MCF 10A (cell line): ENCODE measurements at regions of chr15 and their contacts with region 1.

Region 1: DNA sequence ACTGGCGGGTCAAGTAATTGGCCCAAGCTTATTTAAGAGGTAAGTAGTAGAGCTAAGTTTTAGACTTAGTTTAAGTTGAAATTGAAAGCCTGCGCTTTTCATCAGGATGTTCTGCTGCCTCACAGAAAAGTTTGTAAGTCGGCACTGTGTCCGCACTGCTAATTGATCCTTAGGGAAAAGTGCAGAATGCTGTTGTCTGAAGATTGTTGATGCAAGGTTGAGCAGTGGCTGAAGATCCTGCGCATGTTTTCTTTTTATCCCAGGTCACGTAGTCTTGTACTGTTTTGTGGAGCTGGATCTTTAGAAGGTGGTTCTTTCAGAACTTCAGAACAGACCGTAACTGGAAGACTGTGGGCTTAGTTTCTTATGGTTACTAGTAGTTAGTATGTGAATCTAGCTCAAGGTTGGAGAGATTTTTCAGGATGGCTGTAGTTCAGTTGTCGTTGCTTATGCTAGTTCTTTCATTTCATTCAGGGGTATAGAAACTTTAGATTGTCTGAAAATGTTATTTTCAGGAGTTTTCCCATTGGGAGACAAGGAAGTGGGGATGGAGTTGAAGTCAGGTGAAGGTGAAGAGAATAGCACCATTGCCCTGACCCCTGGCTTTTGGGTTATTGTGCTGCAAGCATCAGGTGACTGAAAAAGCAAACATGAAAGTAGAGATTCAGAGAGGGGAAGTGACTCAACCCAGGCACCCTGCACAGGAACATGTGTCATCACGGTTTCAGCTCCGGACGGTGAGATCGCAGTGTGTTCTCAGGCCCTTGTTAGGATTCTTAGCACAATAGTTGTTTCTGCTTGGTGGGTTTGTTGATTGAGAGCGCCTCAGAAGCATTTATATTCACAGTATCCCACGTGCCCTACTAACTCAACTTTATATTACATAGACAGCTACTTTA is 32.8 kb downstream of the AKAP13 start:
- DNase-seq: peak; percentile 97
- H3K4me3 Mint-ChIP-seq: peak overlapping the region; percentile 60
- H3K27ac Mint-ChIP-seq: peak overlapping the region; percentile 94
- H3K4me1 Mint-ChIP-seq: peaks cover 57% of the 10 kb centered on the region
- H3K27me3 Mint-ChIP-seq: no peaks in the 10 kb centered on the region
- CTCF ChIP-seq: no peak

Region 2: GRCh38 chr15:85010386-85011159 is 402.6 kb before region 1 on chr15:
- CTCF ChIA-PET with region 1: no interaction called
- POLR2A ChIA-PET with region 1: no interaction called
- intact Hi-C with region 1: no loop called
- DNase-seq: no peak
- H3K4me3 Mint-ChIP-seq: no peak overlapping the region
- H3K27ac Mint-ChIP-seq: no peak overlapping the region
- H3K4me1 Mint-ChIP-seq: peaks cover 10% of the 10 kb centered on the region
- H3K27me3 Mint-ChIP-seq: no peaks in the 10 kb centered on the region
- CTCF ChIP-seq: no peak

Region 3: DNA sequence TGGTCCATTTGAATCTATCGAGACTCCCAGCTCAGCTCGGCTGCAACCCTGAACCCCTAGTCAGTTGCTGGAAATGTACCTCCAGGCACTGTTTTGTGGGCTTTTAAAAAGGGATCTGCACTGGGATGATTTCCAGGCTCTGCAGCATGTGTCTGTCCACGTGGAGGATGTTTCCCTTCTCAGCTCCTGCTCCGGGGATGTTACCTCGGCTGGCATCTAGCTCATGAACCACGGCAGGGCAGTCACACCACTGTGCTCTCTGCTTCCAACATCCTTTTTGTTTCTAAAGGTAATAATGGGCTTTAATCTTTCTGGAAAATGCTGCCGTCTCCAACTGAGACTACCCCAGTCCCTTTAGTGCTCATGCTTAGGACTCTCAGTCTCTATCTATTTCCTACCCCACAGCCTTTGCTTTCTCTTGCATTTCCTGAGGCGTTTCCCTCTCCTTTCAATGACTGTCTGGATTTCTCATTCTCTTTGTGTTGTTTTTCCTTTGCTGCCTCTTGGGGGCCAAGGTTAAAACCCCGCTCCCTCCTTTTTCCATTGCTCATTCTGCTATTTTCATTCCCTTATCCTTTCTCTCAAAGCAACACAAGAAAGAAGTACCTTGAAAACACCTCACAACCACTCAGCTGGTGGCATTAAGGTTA is 75.7 kb before region 1 on chr15:
- CTCF ChIA-PET with region 1: interaction called, 134 read pairs
- POLR2A ChIA-PET with region 1: interaction called, 6 read pairs
- intact Hi-C with region 1: no loop called
- DNase-seq: no peak
- H3K4me3 Mint-ChIP-seq: no peak overlapping the region
- H3K27ac Mint-ChIP-seq: no peak overlapping the region
- H3K4me1 Mint-ChIP-seq: peaks cover 25% of the 10 kb centered on the region
- H3K27me3 Mint-ChIP-seq: no peaks in the 10 kb centered on the region
- CTCF ChIP-seq: no peak

Region 4: GRCh38 chr15:85367741-85368140 is 45.5 kb before region 1 on chr15:
- CTCF ChIA-PET with region 1: no interaction called
- POLR2A ChIA-PET with region 1: no interaction called
- intact Hi-C with region 1: no loop called
- DNase-seq: no peak
- H3K4me3 Mint-ChIP-seq: no peak overlapping the region
- H3K27ac Mint-ChIP-seq: no peak overlapping the region
- H3K4me1 Mint-ChIP-seq: no peaks in the 10 kb centered on the region
- H3K27me3 Mint-ChIP-seq: no peaks in the 10 kb centered on the region
- CTCF ChIP-seq: no peak

Region 5: DNA sequence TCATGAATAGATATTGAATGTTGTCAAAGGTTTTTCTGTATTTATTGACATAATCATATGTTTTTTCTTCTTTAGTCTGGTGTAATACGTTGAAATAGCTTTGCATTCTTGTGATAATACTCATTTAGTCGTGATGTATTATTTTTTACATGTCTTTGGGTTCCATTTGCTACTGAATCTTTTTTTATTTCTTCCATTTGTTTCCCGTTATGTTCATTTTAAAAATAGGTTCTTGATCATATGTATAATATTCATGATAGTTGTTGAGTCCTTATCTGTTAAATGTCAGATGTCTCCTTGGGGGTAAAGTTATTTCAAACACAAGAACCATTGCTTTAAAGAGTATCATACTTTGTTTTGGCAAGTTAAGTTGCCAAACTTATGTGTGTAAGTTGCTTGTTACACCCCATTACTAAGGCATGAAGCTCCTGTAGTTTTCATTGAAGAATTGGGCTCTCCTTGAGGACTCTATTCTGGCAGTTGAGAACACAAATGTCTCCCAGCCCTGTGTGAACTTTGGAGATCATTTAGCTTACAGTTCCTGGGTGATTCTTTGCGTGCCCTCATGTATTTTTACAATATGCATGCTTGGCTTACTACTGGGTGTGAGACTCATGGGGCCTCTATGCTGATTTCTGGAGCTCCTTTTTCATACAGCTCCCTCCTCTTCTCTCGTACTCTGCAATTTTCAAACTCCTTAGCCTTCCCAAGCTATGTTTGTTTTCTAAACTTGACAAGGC is 24.5 kb before region 1 on chr15:
- CTCF ChIA-PET with region 1: interaction called, 13 read pairs
- POLR2A ChIA-PET with region 1: interaction called, 94 read pairs
- intact Hi-C with region 1: no loop called
- DNase-seq: no peak
- H3K4me3 Mint-ChIP-seq: no peak overlapping the region
- H3K27ac Mint-ChIP-seq: no peak overlapping the region
- H3K4me1 Mint-ChIP-seq: peaks cover 25% of the 10 kb centered on the region
- H3K27me3 Mint-ChIP-seq: no peaks in the 10 kb centered on the region
- CTCF ChIP-seq: no peak

Region 6: DNA sequence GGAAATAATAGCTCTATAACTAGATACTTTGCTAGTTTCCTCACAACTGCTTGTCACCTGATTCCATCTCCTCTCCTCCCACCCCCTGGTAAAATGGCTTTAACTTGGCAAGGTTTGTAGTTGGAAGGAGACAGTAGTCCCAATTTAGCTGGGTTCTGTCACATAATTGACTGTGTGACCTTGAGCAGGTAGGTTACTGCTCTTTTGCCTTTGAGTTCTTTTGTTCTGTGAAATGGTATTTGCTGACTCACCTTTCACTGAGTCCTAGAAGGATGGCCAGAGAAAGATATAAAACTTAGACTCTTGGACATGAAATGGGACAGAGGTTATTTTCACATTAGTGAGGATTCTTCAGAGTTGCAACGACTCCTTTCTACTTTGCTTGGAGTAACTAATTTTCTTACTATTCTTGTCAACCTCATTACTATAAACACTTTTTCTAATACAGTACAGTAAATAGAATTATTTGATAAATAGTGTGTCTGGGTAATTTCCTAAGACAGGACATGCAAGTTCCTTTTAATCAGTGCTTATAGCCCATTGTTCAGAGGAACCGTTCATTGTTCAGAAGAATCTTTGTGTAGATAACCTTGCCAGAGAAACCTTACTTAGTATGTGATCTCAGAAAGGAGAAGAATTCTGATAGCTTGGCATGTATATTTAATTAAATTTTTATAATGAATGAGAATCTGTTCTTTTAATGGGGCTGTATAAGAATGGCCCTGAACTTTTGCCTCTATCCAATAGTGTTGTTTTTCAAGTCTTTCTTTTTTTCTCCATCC is 18.5 kb before region 1 on chr15:
- CTCF ChIA-PET with region 1: interaction called, 13 read pairs
- POLR2A ChIA-PET with region 1: interaction called, 41 read pairs
- intact Hi-C with region 1: no loop called
- DNase-seq: no peak
- H3K4me3 Mint-ChIP-seq: no peak overlapping the region
- H3K27ac Mint-ChIP-seq: no peak overlapping the region
- H3K4me1 Mint-ChIP-seq: peaks cover 26% of the 10 kb centered on the region
- H3K27me3 Mint-ChIP-seq: no peaks in the 10 kb centered on the region
- CTCF ChIP-seq: no peak

Region 7: GRCh38 chr15:85485956-85486567 is 72.9 kb after region 1 on chr15:
- CTCF ChIA-PET with region 1: interaction called, 4 read pairs
- POLR2A ChIA-PET with region 1: no interaction called
- intact Hi-C with region 1: loop called (anchors 1 kb)
- DNase-seq: peak; percentile 83
- H3K4me3 Mint-ChIP-seq: no peak overlapping the region
- H3K27ac Mint-ChIP-seq: no peak overlapping the region
- H3K4me1 Mint-ChIP-seq: peaks cover 37% of the 10 kb centered on the region
- H3K27me3 Mint-ChIP-seq: no peaks in the 10 kb centered on the region
- CTCF ChIP-seq: peak; percentile 62

Region 8: DNA sequence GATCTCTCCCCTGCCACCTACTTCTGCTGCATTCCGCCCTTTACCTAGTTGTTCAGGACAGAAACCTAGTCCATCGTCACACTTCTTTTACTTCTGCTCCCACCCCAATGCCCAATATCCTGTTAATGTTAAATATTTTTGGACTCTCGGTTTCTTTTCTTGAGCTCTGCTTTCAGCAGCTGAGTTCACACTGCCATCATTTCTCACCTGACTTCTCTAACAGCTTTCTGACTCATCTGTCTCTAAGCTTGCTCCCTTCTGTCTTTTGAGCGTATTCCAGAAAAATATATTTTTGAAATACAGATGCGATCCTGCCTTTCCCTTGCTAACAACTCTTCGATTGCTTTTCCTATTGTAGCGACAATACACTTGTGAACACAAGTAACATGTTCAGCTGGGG is 198.2 kb after region 1 on chr15:
- CTCF ChIA-PET with region 1: no interaction called
- POLR2A ChIA-PET with region 1: no interaction called
- intact Hi-C with region 1: no loop called
- DNase-seq: no peak
- H3K4me3 Mint-ChIP-seq: no peak overlapping the region
- H3K27ac Mint-ChIP-seq: no peak overlapping the region
- H3K4me1 Mint-ChIP-seq: peaks cover 27% of the 10 kb centered on the region
- H3K27me3 Mint-ChIP-seq: no peaks in the 10 kb centered on the region
- CTCF ChIP-seq: no peak